PC-9 (cell line): ENCODE measurements at regions of chr10 and their contacts with region 1.

Region 1: DNA sequence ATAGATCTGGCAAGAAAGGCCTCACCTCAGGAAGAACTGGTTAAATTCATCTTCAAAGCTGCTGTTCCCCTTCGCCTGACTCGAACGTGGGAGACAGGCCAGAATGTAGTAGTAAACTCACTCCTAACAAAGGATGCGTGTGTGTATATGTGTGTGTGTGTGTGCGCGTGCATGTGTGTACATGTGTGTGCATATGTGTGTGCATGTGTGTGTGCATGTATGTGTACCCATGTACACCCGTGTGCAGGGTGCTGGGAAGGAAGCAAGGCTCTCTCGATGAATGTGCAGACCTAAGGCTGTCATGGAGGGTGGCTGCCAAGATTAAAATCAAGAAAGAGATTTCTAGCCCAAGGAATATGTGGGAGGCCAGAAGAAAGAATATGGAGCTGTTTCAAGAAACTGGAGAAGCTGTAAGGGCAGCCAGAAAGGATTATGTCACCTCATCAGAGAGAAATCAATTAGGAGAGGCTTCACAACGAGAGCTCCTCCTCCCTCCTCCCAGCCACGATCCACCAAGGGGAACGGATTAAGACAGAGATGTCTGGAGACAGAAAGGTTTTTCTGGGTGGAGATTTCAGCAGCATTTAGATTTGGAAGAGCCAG is 34.0 kb upstream of the LBX1 start:
- DNase-seq: no peak
- H3K4me3 ChIP-seq: no peak overlapping the region
- H3K27ac ChIP-seq: no peak overlapping the region
- H3K4me1 ChIP-seq: no peaks in the 10 kb centered on the region
- H3K27me3 ChIP-seq: no peaks in the 10 kb centered on the region
- CTCF ChIP-seq: no peak

Region 2: DNA sequence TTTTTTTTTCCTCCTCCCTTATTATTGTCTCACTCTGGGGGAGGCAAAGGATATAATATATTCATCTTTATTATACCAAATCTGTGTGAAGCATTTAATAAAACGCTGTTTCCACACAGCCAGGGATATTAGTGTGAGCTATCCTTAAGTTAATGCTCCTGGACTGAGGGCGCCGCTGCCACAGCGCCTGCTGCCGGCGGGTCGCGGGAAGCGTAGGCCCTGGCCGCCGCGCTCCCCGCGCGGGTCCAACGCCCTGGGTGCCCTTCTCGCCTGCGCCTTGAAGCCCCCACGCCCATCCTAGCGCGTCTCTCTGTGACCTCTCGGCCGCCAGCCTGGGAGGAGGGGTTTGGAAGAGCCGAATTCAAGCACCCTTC is 24.5 kb before region 1 on chr10:
- CTCF ChIA-PET with region 1: interaction called, 24 read pairs
- POLR2A ChIA-PET with region 1: no interaction called
- intact Hi-C with region 1: no loop called
- DNase-seq: no peak
- H3K4me3 ChIP-seq: no peak overlapping the region
- H3K27ac ChIP-seq: no peak overlapping the region
- H3K4me1 ChIP-seq: no peaks in the 10 kb centered on the region
- H3K27me3 ChIP-seq: peaks cover 15% of the 10 kb centered on the region
- CTCF ChIP-seq: peak; percentile 21; the same call in 1 of the 2 replicates